ENCODE measurements at regions of chr6 and their contacts with region 1.

Region 1: GRCh38 chr6:135610192-135610815 is 112.8 kb upstream of the AHI1 start:
- DNase-seq: no peak
- ATAC-seq: no peak
- H3K4me3 ChIP-seq: no peak overlapping the region
- H3K27ac ChIP-seq: no peak overlapping the region
- H3K4me1 ChIP-seq: no peaks in the 10 kb centered on the region
- H3K27me3 ChIP-seq: no peaks in the 10 kb centered on the region
- CTCF ChIP-seq: no peak
- POLR2A ChIP-seq: no peak
- RAD21 ChIP-seq: no peak

Region 2: DNA sequence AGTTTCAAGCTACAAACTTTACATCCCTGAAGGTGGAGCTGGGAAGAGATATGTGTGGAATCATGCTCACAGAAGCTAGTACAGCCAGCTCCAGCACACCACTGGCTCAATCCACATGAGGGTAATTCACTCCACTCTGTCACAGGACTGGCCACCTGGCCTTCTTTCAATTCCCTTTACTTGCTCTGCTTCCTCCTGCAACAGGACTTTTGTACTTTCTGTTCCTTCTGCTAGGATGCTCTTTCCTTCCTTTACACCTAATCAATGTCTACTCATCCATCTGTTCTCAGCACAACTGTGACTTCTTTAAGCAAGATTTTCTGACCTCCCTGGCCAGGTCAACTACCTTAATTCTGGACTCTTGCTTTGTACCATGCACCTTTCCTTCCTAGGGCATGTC is 468.6 kb before region 1 on chr6:
- CTCF ChIA-PET with region 1: no interaction called
- POLR2A ChIA-PET with region 1: no interaction called
- dilution Hi-C with region 1: no loop called
- in situ Hi-C with region 1: no loop called
- intact Hi-C with region 1: no loop called
- DNase-seq: no peak
- ATAC-seq: no peak
- H3K4me3 ChIP-seq: no peak overlapping the region
- H3K27ac ChIP-seq: no peak overlapping the region
- H3K4me1 ChIP-seq: peaks cover 4% of the 10 kb centered on the region
- H3K27me3 ChIP-seq: peaks cover 21% of the 10 kb centered on the region
- CTCF ChIP-seq: no peak
- POLR2A ChIP-seq: no peak
- RAD21 ChIP-seq: no peak

Region 3: DNA sequence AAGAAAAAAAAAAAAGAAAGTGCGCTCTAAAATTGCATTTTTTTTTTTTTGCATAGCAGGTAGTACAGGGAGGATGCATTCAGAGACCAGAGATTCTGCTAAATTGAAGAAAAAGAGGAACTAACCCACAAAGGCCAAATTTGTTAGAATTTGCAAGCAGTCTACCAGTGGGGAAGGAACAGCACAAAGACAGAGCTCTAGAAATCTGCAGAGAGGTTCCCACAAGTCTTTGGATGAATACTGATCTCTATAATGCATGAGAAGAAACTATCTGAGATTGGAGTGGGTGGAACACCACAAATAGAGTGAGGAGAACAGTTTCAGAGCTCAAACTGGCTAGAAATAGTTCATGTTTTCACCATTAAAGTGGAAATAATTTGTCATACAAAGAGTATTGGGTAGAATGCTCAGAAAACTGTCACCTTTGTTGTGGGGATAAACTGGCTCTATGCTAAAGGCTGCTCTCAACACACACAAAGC is 33.2 kb before region 1 on chr6:
- CTCF ChIA-PET with region 1: no interaction called
- POLR2A ChIA-PET with region 1: no interaction called
- dilution Hi-C with region 1: no loop called
- in situ Hi-C with region 1: no loop called
- intact Hi-C with region 1: loop called (anchors 5 kb)
- DNase-seq: no peak
- ATAC-seq: no peak
- H3K4me3 ChIP-seq: no peak overlapping the region
- H3K27ac ChIP-seq: no peak overlapping the region
- H3K4me1 ChIP-seq: no peaks in the 10 kb centered on the region
- H3K27me3 ChIP-seq: no peaks in the 10 kb centered on the region
- CTCF ChIP-seq: no peak
- POLR2A ChIP-seq: no peak
- RAD21 ChIP-seq: no peak

Region 4: DNA sequence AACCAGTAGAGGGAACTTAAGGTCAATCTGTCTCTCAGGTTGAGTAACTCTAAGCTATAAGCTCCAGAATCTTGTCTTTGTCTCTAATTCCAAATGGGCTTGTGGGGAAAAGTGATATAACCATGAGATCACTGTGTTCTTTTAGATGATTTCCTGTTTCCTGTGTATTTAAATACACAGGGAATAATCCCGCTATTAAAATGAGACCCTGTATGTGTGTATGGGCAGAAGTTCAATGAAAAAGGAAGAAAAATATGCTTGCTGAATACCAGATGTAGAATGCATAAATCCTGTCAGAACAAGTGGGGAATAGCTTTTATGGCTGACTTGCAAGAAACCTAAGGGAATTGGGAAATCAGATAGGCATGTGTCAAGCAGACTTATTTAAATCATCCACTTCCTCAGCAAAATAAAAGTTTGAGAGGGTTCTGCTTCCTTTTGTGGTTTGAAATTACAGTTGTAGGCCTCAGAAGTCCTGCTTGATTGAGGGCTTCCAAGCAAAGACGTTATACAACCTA is 76.5 kb after region 1 on chr6:
- CTCF ChIA-PET with region 1: no interaction called
- POLR2A ChIA-PET with region 1: no interaction called
- dilution Hi-C with region 1: no loop called
- in situ Hi-C with region 1: no loop called
- intact Hi-C with region 1: no loop called
- DNase-seq: peak; percentile 60
- ATAC-seq: no peak; the same call in 1 of the 2 replicates
- H3K4me3 ChIP-seq: no peak overlapping the region
- H3K27ac ChIP-seq: no peak overlapping the region
- H3K4me1 ChIP-seq: peaks cover 5% of the 10 kb centered on the region; the same call in 1 of the 2 replicates
- H3K27me3 ChIP-seq: no peaks in the 10 kb centered on the region
- CTCF ChIP-seq: no peak
- POLR2A ChIP-seq: no peak
- RAD21 ChIP-seq: no peak